ENCODE measurements at regions of chr2 and their contacts with region 1.

Region 1: GRCh38 chr2:149808556-149808955 is 221.0 kb upstream of the MMADHC start:
- DNase-seq: no peak
- ATAC-seq: no peak
- H3K4me3 ChIP-seq: no peak overlapping the region
- H3K4me3 Mint-ChIP-seq: no peak overlapping the region
- H3K27ac ChIP-seq: no peak overlapping the region
- H3K27ac Mint-ChIP-seq: no peak overlapping the region
- H3K4me1 ChIP-seq: no peaks in the 10 kb centered on the region
- H3K4me1 Mint-ChIP-seq: no peaks in the 10 kb centered on the region
- H3K27me3 ChIP-seq: no peaks in the 10 kb centered on the region
- H3K27me3 Mint-ChIP-seq: no peaks in the 10 kb centered on the region

Region 2: GRCh38 chr2:149648282-149649030 is 160.1 kb before region 1 on chr2:
- CTCF ChIA-PET with region 1: no interaction called
- POLR2A ChIA-PET with region 1: interaction called in 1 of 2 experiments, 10 read pairs
- DNase-seq: no peak
- ATAC-seq: no peak
- H3K4me3 ChIP-seq: no peak overlapping the region
- H3K4me3 Mint-ChIP-seq: no peak overlapping the region
- H3K27ac ChIP-seq: no peak overlapping the region
- H3K27ac Mint-ChIP-seq: no peak overlapping the region
- H3K4me1 ChIP-seq: no peaks in the 10 kb centered on the region
- H3K4me1 Mint-ChIP-seq: no peaks in the 10 kb centered on the region
- H3K27me3 ChIP-seq: no peaks in the 10 kb centered on the region
- H3K27me3 Mint-ChIP-seq: peaks cover 10 to 31% of the 10 kb centered on the region in 2 donors

Region 3: GRCh38 chr2:149860276-149860921 is 51.8 kb after region 1 on chr2:
- CTCF ChIA-PET with region 1: no interaction called
- POLR2A ChIA-PET with region 1: no interaction called
- DNase-seq: no peak
- ATAC-seq: no peak
- H3K4me3 ChIP-seq: no peak overlapping the region
- H3K4me3 Mint-ChIP-seq: no peak overlapping the region
- H3K27ac ChIP-seq: no peak overlapping the region
- H3K27ac Mint-ChIP-seq: no peak overlapping the region
- H3K4me1 ChIP-seq: no peaks in the 10 kb centered on the region
- H3K4me1 Mint-ChIP-seq: no peaks in the 10 kb centered on the region
- H3K27me3 ChIP-seq: no peaks in the 10 kb centered on the region
- H3K27me3 Mint-ChIP-seq: no peaks in the 10 kb centered on the region

Region 4: GRCh38 chr2:150036622-150037021 is 228.1 kb after region 1 on chr2:
- CTCF ChIA-PET with region 1: no interaction called
- POLR2A ChIA-PET with region 1: no interaction called
- DNase-seq: no peak
- ATAC-seq: no peak
- H3K4me3 ChIP-seq: no peak overlapping the region
- H3K4me3 Mint-ChIP-seq: no peak overlapping the region
- H3K27ac ChIP-seq: no peak overlapping the region
- H3K27ac Mint-ChIP-seq: no peak overlapping the region
- H3K4me1 ChIP-seq: no peaks in the 10 kb centered on the region
- H3K4me1 Mint-ChIP-seq: no peaks in the 10 kb centered on the region
- H3K27me3 ChIP-seq: no peaks in the 10 kb centered on the region
- H3K27me3 Mint-ChIP-seq: no peaks in the 10 kb centered on the region

Region 5: DNA sequence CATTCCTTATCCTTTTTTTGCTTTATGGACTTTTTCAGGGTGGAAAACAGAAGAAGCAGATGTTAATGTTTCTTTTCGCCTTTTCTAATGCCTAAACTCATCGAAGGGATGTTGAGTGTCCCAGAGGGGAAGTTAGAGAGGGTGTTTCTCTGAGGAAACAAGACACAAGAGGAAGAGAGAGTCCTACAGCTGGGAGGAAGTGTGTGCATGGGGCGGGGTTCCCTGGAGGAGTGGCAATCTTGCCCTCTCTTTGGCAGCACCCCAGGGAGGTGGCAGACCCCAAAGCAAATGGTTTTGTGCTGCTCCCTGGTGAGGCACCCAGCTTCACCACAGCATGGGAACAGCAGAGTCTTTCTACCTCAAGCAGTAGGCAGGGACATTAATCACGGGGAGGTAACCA is 301.4 kb after region 1 on chr2:
- CTCF ChIA-PET with region 1: no interaction called
- POLR2A ChIA-PET with region 1: no interaction called
- DNase-seq: no peak
- ATAC-seq: no peak
- H3K4me3 ChIP-seq: no peak overlapping the region
- H3K4me3 Mint-ChIP-seq: no peak overlapping the region
- H3K27ac ChIP-seq: no peak overlapping the region
- H3K27ac Mint-ChIP-seq: no peak overlapping the region
- H3K4me1 ChIP-seq: no peaks in the 10 kb centered on the region
- H3K4me1 Mint-ChIP-seq: no peaks in the 10 kb centered on the region
- H3K27me3 ChIP-seq: no peaks in the 10 kb centered on the region
- H3K27me3 Mint-ChIP-seq: no peaks in the 10 kb centered on the region